Activated CD4-positive, alpha-beta T cell treated with anti-CD3 and anti-CD28 coated beads, Interleukin-2, amount 10 ng/mL, durations not matched to agents 7 days and 5 days (primary cell): ENCODE measurements at regions of chr7 and their contacts with region 1.

Region 1: GRCh38 chr7:27689591-27690164 is 27.0 kb upstream of the HIBADH start:
- DNase-seq: peak; percentile 8
- H3K4me3 Mint-ChIP-seq: no peak overlapping the region
- H3K27ac Mint-ChIP-seq: no peak overlapping the region
- H3K4me1 Mint-ChIP-seq: no peaks in the 10 kb centered on the region
- H3K27me3 Mint-ChIP-seq: peaks cover 15% of the 10 kb centered on the region

Region 2: DNA sequence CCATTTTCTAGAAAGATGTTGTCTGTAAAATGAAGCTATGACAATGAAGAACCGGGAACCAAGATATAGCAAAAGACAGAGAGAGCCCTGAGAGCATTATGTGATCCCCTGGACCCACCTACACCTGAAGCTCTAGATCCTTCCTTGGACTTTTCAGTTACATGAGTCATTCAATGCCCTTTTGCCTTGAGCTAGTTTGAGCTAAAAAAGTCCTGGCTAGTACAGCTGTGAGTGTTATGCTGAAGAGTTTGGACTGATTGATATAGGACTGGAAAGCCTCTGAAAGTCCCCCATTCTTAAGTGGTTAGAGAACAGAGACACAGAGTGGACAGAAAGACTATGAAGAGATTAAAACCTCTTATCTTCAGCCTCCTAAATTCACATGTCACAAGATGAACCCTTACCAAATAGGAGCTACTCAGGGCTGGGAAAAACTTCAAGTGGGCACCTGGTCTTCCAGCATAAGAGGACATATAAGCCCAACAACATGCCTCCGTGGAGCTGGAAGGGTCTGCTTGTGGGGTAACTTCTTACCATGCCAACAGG is 1924.5 kb before region 1 on chr7:
- CTCF ChIA-PET with region 1: no interaction called
- POLR2A ChIA-PET with region 1: interaction called, 11 read pairs
- DNase-seq: no peak
- H3K4me3 Mint-ChIP-seq: no peak overlapping the region
- H3K27ac Mint-ChIP-seq: no peak overlapping the region
- H3K4me1 Mint-ChIP-seq: no peaks in the 10 kb centered on the region
- H3K27me3 Mint-ChIP-seq: peaks cover 3% of the 10 kb centered on the region